AG04450 (cell line): ENCODE measurements at regions of chr18 and their contacts with region 1.

Region 1: GRCh38 chr18:59308248-59308937 is 10.1 kb downstream of the CPLX4 start:
- DNase-seq: peak; percentile 4
- H3K4me3 ChIP-seq: peak overlapping the region; percentile 45
- H3K27ac ChIP-seq: no peak overlapping the region
- H3K27me3 ChIP-seq: peaks cover 54% of the 10 kb centered on the region
- CTCF ChIP-seq: peak; percentile 86

Region 2: DNA sequence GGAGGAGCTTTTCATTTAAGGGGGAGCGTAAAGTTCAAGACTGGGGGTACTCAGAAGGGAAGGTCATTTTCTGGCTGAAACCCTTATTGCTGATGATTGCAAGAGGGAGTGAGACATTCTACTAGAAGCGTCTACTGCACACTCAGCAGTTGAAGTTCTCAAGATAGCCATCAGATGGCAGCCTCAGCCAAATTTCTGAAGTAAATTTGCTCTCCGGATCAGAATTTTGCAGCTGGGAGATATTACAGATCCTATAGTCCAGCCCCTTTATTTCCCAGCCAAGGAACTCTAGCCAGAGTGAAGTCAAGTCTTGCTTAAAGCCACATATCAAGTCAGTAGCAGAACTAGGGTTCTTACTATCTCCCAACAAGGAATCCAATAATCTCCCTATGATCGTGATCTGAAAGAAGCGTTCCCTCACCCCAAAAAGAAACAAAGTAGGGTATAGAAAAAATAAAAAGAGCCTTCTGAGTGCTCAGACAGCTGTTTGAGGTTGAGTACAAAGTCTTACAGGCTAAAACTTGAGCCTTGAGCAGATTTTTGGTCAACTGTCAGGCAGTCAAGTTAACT is 59.1 kb before region 1 on chr18:
- CTCF ChIA-PET with region 1: interaction called, 23 read pairs
- POLR2A ChIA-PET with region 1: no interaction called
- DNase-seq: peak; percentile 65
- H3K4me3 ChIP-seq: no peak overlapping the region
- H3K27ac ChIP-seq: no peak overlapping the region
- H3K27me3 ChIP-seq: peaks cover 13% of the 10 kb centered on the region
- CTCF ChIP-seq: peak; percentile 88

Region 3: GRCh38 chr18:59332986-59333385 is 24.6 kb after region 1 on chr18:
- CTCF ChIA-PET with region 1: interaction called, 13 read pairs
- POLR2A ChIA-PET with region 1: no interaction called
- DNase-seq: no peak
- H3K4me3 ChIP-seq: no peak overlapping the region
- H3K27ac ChIP-seq: no peak overlapping the region
- H3K27me3 ChIP-seq: no peaks in the 10 kb centered on the region
- CTCF ChIP-seq: no peak

Region 4: GRCh38 chr18:59382383-59382782 is 74.0 kb after region 1 on chr18:
- CTCF ChIA-PET with region 1: interaction called, 15 read pairs
- POLR2A ChIA-PET with region 1: no interaction called
- DNase-seq: no peak
- H3K4me3 ChIP-seq: no peak overlapping the region
- H3K27ac ChIP-seq: no peak overlapping the region
- H3K27me3 ChIP-seq: peaks cover 13% of the 10 kb centered on the region
- CTCF ChIP-seq: no peak

Region 5: DNA sequence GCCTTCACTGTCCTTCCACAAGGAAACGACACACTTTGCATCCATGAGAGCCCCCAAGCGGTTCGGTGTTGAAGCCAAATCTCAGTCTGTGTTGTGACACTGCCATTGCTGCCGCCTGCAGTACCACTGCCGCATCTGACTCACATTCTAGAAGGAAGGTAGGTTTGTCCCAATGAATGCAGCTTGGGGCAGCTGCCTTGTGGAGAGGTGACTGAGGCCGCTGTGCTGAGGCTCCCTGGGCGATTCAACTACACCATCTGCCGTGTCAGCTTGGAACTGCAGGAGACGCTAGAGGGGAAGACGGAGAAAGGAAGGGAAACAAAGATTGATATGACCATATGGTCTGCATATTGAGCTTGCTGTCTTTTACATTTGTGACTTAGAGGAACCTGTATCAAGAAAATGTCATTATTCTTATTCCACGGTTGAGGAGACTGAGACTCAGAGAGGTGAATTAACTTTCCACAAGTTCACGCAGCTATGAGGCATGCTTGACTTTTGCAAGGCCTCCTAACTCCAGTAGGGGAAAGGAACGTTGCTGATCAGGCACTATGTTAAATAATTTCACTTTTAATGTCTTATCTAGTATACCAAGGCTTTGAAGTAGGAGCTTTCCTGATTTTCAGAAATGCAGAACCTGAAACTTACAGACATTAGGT is 94.2 kb after region 1 on chr18:
- CTCF ChIA-PET with region 1: interaction called, 242 read pairs
- POLR2A ChIA-PET with region 1: no interaction called
- DNase-seq: peak; percentile 29
- H3K4me3 ChIP-seq: no peak overlapping the region
- H3K27ac ChIP-seq: no peak overlapping the region
- H3K27me3 ChIP-seq: no peaks in the 10 kb centered on the region
- CTCF ChIP-seq: peak; percentile 97

Region 6: GRCh38 chr18:59606193-59607077 is 298.0 kb after region 1 on chr18:
- CTCF ChIA-PET with region 1: no interaction called
- POLR2A ChIA-PET with region 1: no interaction called
- DNase-seq: peak; percentile 79
- H3K4me3 ChIP-seq: no peak overlapping the region
- H3K27ac ChIP-seq: peak overlapping the region; percentile 57
- H3K27me3 ChIP-seq: no peaks in the 10 kb centered on the region
- CTCF ChIP-seq: no peak